Dendritic cell treated with granulocyte-macrophage colony-stimulating factor and Interleukin-4, amounts not matched to agents 40 ng/mL and 50 ng/mL, for 4 days (primary cell): ENCODE measurements at regions of chr2 and their contacts with region 1.

Region 1: GRCh38 chr2:26244309-26245121 is at the starts of genes HADHA and HADHB:
- H3K4me3 Mint-ChIP-seq: peak within 1 kb of the TSS; percentile 99
- H3K27ac Mint-ChIP-seq: peak within 1 kb of the TSS; percentile 99
- H3K4me1 Mint-ChIP-seq: peaks cover 41% of the 10 kb centered on the region
- H3K27me3 Mint-ChIP-seq: no peaks in the 10 kb centered on the region

Region 2: DNA sequence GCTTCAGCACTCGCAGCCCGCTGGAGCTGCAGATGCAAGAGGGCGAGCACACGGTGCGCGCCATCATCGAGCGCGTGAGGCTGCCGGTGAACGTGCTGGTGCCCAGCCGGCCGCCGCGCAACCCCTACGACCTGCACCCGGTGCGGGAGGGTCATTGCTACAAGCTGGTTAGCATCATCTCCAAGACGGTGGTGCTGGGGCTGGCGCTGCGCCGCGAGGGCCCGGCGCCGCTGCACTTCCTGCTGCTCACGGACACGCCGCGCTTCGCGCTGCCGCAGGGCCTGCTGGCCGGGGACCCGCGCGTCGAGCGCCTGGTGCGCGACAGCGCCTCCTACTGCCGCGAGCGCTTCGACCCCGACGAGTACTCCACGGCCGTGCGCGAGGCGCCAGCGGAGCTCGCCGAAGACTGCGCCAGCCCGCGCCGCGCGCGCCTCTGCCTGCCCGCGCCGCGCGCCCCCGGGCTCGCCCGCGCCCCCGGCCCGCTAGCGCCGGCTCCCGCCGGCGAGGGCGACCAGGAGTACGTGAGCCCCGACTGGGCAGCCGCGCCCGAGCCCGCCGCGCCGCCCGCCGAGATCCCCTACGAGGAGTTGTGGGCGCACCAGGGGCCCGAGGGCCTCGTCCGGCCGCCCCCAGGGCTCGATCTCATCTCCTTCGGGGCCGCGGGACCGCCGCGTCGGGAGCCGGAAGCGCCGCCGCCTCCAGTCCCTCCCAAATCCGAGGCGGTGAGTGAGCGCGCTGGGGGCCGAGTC is 59.8 kb before region 1 on chr2:
- intact Hi-C with region 1: loop called (anchors 2 kb)
- H3K4me3 Mint-ChIP-seq: peak overlapping the region; percentile 73
- H3K27ac Mint-ChIP-seq: no peak overlapping the region
- H3K4me1 Mint-ChIP-seq: peaks cover 30% of the 10 kb centered on the region
- H3K27me3 Mint-ChIP-seq: peaks cover 51% of the 10 kb centered on the region

Region 3: DNA sequence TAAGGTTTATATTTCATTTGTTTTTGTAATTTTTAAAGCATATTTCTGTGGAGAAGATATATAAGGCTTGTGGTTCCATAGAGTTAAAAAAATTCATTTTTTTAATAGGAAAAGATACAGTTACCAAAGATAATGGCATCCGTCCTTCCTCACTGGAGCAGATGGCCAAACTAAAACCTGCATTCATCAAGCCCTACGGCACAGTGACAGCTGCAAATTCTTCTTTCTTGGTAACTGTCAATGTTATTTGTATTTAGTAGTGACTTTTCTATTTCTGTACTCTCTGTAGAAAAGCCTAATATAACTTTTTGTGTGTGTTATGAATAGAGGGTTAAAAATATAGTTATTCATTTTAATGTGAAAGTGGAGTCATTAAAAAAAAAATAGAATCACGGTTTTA is 35.4 kb after region 1 on chr2:
- intact Hi-C with region 1: loop called (anchors 5 kb)
- H3K4me3 Mint-ChIP-seq: no peak overlapping the region
- H3K27ac Mint-ChIP-seq: no peak overlapping the region
- H3K4me1 Mint-ChIP-seq: peaks cover 7% of the 10 kb centered on the region
- H3K27me3 Mint-ChIP-seq: no peaks in the 10 kb centered on the region

Region 4: GRCh38 chr2:26345545-26346453 is 101.3 kb after region 1 on chr2 and contains the start of gene SELENOI:
- intact Hi-C with region 1: loop called (anchors 5 kb)
- H3K4me3 Mint-ChIP-seq: peak within 1 kb of the TSS; percentile 89
- H3K27ac Mint-ChIP-seq: peak within 1 kb of the TSS; percentile 93
- H3K4me1 Mint-ChIP-seq: peaks cover 25% of the 10 kb centered on the region
- H3K27me3 Mint-ChIP-seq: no peaks in the 10 kb centered on the region